Caco-2 (cell line): ENCODE measurements at regions of chr5 and their contacts with region 1.

Region 1: DNA sequence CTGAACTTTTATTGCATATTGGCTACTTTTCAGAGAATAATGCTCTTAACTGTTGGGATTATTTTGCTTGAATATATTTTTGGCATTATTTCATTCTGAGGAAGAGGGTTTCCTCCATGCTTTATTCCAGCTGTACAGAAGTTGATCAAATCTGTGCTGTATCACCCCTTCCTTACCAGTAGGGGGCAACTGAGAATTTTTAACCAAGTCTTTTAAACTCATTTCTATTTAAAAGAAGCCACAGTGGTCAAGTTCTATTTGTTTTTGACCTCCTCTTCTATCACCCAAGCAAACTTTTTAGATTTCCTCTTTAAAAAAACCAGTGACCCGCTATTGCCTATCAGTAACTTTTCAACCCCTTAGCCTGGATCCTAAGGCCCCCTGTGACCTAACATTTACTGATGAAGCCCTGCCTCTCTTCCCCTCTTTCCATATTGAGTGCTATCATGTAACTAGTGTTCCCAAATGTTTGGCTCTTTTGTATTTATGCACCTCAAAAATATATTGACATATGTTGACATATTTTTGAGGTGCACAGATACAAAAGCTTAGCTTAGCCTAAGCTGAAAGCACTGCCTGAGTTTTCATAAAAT is 80.6 kb downstream of the FBXO4 start:
- DNase-seq: no peak
- H3K4me3 ChIP-seq: no peak overlapping the region
- H3K4me3 Mint-ChIP-seq: no peak overlapping the region
- H3K27ac Mint-ChIP-seq: no peak overlapping the region
- H3K4me1 ChIP-seq: no peaks in the 10 kb centered on the region
- H3K4me1 Mint-ChIP-seq: no peaks in the 10 kb centered on the region
- H3K27me3 ChIP-seq: no peaks in the 10 kb centered on the region
- H3K27me3 Mint-ChIP-seq: peaks cover 2% of the 10 kb centered on the region
- CTCF ChIP-seq: peak; percentile 66 to 74

Region 2: DNA sequence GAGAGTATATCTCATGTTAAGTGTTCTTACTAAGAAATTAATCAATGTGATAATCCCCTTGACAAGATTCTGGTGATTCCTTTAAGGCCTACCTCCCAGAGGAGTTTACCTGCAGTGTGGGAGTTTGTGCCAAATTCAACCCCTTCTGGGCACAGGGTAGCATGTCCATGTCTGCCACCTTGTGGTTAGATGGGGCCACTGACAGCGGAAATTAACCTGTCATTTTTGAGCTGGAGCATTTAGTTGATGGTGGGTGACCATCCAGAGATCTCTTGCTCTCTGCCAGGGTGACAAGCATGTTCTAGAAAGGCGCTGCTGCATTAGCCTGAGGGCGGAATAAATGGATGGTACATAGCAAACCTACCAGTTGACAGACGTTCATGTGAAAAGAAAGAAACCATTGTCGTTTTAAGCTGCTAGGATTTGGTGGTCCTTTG is 51.6 kb after region 1 on chr5:
- CTCF ChIA-PET with region 1: interaction called, 8 read pairs
- POLR2A ChIA-PET with region 1: no interaction called
- intact Hi-C with region 1: loop called (anchors 1 kb)
- DNase-seq: peak; percentile 59 to 68
- H3K4me3 ChIP-seq: no peak overlapping the region
- H3K4me3 Mint-ChIP-seq: no peak overlapping the region
- H3K27ac Mint-ChIP-seq: no peak overlapping the region
- H3K4me1 ChIP-seq: no peaks in the 10 kb centered on the region
- H3K4me1 Mint-ChIP-seq: no peaks in the 10 kb centered on the region
- H3K27me3 ChIP-seq: no peaks in the 10 kb centered on the region
- H3K27me3 Mint-ChIP-seq: peaks cover 6% of the 10 kb centered on the region
- CTCF ChIP-seq: peak; percentile 75 to 82